HepG2 (cell line): ENCODE measurements at regions of chr12 and their contacts with region 1.

Region 1: DNA sequence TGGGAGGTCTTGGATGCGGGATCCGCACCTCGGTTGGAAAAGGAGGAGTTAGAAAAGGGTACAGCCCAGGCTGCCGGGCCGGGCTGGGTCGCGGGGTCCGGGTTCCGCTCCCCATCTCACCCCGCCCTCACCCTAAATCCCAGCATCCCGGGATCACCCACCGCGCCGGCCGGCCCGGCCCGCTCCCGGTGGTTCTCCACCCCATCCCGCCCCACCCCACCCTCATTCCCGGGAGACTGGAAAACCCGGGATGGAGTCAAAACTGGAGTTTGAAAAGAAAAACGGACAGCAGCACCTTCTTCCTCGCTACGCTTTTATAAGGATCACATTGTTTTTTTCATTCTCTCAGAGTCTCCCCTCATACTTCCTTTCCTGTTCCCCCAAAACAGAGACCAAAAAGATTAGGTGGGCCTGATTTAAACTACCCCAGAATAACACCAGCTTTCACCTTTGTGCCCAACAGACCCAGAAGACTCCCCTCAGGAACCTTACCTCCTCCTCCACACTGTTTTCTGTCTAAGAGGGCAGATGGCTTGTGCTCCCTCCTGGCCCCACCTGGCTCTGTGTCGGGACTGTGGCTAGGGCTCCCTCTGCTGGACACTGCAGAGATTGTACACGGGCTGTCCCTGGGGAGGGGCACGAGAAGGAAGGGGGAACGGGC is 2.8 kb downstream of the GLI1 start:
- DNase-seq: peak; percentile 80
- ATAC-seq: peak; percentile 86
- H3K4me3 ChIP-seq: peak overlapping the region; percentile 53 to 94 (median 68)
- H3K27ac ChIP-seq: no peak overlapping the region
- H3K4me1 ChIP-seq: peaks cover 50% of the 10 kb centered on the region
- H3K27me3 ChIP-seq: peaks cover 0 to 35% of the 10 kb centered on the region in 2 experiments; a peak in 3 of 5 replicates
- CTCF ChIP-seq: peak; percentile 96
- EP300 ChIP-seq: no peak
- POLR2A ChIP-seq: no peak
- RAD21 ChIP-seq: peak; percentile 76; the same call in 1 of the 2 replicates

Region 2: DNA sequence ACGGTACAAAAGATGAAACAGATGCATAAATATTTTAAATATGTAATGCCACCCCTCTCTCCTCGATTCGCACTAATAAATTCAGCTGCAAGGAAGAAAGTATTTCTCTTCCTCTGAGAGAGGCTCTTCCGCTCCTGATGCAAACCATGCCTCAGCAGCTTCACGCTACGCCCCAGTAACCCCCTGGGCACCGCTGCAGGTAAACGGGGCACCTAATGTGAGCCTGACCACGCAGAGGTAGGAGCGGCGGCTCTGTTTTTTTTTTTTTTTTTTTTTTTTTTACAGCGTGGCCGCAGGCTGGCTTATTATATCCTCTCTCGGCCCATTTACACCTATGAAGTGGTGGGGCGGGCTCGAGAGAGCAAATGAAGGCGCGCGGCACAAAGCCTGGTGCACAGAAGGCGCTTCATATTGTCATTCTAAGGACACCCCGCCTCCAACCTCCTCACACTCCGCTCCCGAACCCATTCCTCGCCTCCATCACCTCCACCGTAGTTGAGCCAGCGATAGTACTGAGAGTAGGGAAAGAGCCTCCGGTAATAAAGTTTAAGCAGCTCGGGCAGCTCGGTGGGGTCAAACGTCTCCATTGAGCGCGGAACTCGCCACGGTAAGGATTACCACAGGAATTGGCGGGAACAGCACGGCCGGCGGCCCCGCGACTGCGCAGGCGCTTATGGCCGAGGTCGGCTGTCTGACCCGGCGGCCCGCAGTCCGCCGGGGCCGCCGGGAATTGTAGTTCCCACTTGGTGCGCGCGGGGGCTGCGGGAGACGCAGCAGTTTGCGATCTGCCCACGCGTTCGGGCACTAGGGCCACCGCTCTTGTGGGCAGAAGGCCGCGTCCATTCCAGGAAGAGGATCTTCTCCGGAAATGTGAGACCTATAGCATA is 710.4 kb before region 1 on chr12 and contains the start of gene PRIM1:
- CTCF ChIA-PET with region 1: no interaction called
- POLR2A ChIA-PET with region 1: no interaction called
- in situ Hi-C with region 1: no loop called
- intact Hi-C with region 1: loop called (anchors 10 kb)
- DNase-seq: peak; percentile 65
- ATAC-seq: peak; percentile 92
- H3K4me3 ChIP-seq: peak within 1 kb of the TSS; percentile 63 to 86 (median 85)
- H3K27ac ChIP-seq: peak within 1 kb of the TSS; percentile 83
- H3K4me1 ChIP-seq: peaks cover 30% of the 10 kb centered on the region
- H3K27me3 ChIP-seq: no peaks in the 10 kb centered on the region
- CTCF ChIP-seq: no peak
- EP300 ChIP-seq: 0 out of 4 replicates have a peak, but pooled peaks of 1 of the 2 experiments have one; percentile 19
- POLR2A ChIP-seq: peak; percentile 72 to 73
- RAD21 ChIP-seq: peak; percentile 21; the same call in 1 of the 2 replicates
- total RNA-seq, gene PRIM1: 47.3 and 67.0 TPM in 2 replicates

Region 3: GRCh38 chr12:57261428-57261865 is 200.9 kb before region 1 on chr12:
- CTCF ChIA-PET with region 1: interaction called, 4 read pairs
- POLR2A ChIA-PET with region 1: no interaction called
- in situ Hi-C with region 1: loop called (anchors 5 kb)
- intact Hi-C with region 1: no loop called
- DNase-seq: no peak
- ATAC-seq: no peak
- H3K4me3 ChIP-seq: no peak overlapping the region
- H3K27ac ChIP-seq: no peak overlapping the region
- H3K4me1 ChIP-seq: peaks cover 13% of the 10 kb centered on the region
- H3K27me3 ChIP-seq: no peaks in the 10 kb centered on the region
- CTCF ChIP-seq: no peak
- EP300 ChIP-seq: no peak
- POLR2A ChIP-seq: no peak
- RAD21 ChIP-seq: no peak

Region 4: DNA sequence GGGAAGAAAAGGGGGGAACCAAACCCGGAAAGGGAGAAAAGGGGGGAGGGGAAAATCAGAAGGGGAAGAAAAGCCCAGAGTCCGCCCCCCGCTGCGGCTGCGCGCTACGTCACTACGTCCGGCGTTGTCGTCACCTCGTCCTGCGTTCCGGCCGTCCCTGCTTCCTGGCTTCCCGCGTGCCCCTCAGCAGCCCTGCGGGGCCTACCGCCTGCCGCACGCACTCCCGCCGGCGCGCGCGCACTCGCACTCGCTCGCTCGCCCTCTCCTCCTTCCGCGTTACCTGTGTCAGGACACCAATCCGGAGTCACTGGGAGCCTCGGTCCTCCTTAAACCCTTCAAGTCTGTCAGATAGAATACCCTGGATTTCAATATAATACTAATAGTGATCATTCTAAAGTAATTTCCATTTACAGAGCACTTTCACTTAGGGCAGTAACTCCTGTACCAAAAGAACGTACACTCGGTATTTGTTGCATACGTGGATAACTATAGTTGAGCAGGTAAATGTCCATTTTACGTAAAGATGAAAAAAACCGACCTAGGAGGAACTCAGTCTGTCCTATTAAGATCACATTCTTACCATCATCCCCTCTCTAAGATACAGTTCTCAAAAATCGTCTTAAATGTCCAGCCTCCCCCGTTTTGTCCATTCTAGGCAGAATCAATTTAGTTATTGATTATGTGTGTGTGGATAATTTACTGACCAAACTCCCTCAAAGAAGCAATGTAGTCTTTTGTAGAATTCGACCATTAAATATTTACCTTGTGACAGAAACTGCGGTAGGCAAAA is 31.3 kb before region 1 on chr12 and contains the start of gene R3HDM2:
- CTCF ChIA-PET with region 1: no interaction called
- POLR2A ChIA-PET with region 1: interaction called, 11 read pairs
- in situ Hi-C with region 1: no loop called
- intact Hi-C with region 1: no loop called
- DNase-seq: peak; percentile 89
- ATAC-seq: peak; percentile 81
- H3K4me3 ChIP-seq: peak within 1 kb of the TSS; percentile 63 to 77 (median 73)
- H3K27ac ChIP-seq: peak within 1 kb of the TSS; percentile 88
- H3K4me1 ChIP-seq: peaks cover 51% of the 10 kb centered on the region
- H3K27me3 ChIP-seq: no peaks in the 10 kb centered on the region; a peak in 1 of 5 replicates
- CTCF ChIP-seq: peak; percentile 10; the same call in 1 of the 2 replicates
- EP300 ChIP-seq: peak in 1 of 2 experiments; percentile 18; a peak in 1 of 4 replicates
- POLR2A ChIP-seq: peak; percentile 79 to 88
- RAD21 ChIP-seq: no peak
- total RNA-seq, gene R3HDM2: 8.3 and 11.1 TPM in 2 replicates

Region 5: DNA sequence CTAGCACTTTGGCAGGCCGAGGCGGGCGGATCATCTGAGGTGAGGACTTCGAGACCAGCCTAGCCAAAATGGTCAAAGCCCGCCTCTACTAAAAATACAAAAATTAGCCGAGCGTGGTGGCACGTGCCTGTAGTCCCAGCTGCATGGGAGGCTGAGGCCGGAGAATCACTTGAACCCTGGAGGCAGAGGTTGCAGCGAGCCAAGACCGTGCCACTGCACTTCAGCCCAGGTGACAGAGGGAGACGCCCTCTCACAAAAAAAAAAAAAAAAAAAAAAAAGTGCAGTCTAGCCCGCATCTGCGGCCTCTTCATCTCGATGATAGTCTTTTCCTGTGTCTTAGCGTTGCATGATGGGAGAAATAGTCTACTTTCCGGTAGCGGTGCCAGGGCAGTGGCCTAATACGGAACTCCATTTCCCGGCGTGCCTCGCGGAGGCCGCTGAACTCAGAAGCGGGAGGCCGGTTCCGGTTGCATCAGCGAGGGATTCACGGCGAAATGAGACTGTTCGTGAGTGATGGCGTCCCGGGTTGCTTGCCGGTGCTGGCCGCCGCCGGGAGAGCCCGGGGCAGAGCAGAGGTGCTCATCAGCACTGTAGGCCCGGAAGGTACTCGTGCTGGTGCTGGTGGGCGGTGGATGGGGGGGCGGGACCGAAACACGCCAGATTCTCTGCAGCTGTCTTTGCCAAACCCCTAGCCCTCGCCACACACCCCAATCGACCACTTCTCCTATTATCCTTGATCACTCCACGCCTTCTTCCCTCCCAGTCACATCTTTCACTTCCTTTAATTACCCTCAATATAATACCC is 25.4 kb after region 1 on chr12 and contains the start of gene MARS1:
- CTCF ChIA-PET with region 1: no interaction called
- POLR2A ChIA-PET with region 1: no interaction called
- in situ Hi-C with region 1: no loop called
- intact Hi-C with region 1: loop called (anchors 2 kb)
- DNase-seq: peak; percentile 96
- ATAC-seq: peak; percentile 96
- H3K4me3 ChIP-seq: peak within 1 kb of the TSS; percentile 95 to 97 (median 96)
- H3K27ac ChIP-seq: peak within 1 kb of the TSS; percentile 62
- H3K4me1 ChIP-seq: peaks cover 23% of the 10 kb centered on the region
- H3K27me3 ChIP-seq: peaks cover 0 to 4% of the 10 kb centered on the region in 2 experiments; a peak in 1 of 5 replicates
- CTCF ChIP-seq: peak; percentile 59
- EP300 ChIP-seq: 0 out of 4 replicates have a peak, but pooled peaks have one; percentile 15 to 16
- POLR2A ChIP-seq: peak; percentile 71 to 80
- RAD21 ChIP-seq: 0 out of 2 replicates have a peak, but pooled peaks have one; percentile 30
- total RNA-seq, gene MARS1: 177 and 181 TPM in 2 replicates